Prostate gland (tissue), 2 donors: ENCODE measurements at regions of chr15 and their contacts with region 1.

Region 1: GRCh38 chr15:93072411-93073394 is 16.3 kb downstream of the RGMA start:
- DNase-seq: peak; percentile 86
- H3K4me3 ChIP-seq: peak overlapping the region; percentile 60 to 68
- H3K27ac ChIP-seq: peak overlapping the region; percentile 74 to 79
- H3K4me1 ChIP-seq: peaks cover 3% of the 10 kb centered on the region
- H3K27me3 ChIP-seq: no peaks in the 10 kb centered on the region
- CTCF ChIP-seq: peak in 2 of 4 experiments; percentile 10 to 27
- POLR2A ChIP-seq: peak; percentile 86

Region 2: DNA sequence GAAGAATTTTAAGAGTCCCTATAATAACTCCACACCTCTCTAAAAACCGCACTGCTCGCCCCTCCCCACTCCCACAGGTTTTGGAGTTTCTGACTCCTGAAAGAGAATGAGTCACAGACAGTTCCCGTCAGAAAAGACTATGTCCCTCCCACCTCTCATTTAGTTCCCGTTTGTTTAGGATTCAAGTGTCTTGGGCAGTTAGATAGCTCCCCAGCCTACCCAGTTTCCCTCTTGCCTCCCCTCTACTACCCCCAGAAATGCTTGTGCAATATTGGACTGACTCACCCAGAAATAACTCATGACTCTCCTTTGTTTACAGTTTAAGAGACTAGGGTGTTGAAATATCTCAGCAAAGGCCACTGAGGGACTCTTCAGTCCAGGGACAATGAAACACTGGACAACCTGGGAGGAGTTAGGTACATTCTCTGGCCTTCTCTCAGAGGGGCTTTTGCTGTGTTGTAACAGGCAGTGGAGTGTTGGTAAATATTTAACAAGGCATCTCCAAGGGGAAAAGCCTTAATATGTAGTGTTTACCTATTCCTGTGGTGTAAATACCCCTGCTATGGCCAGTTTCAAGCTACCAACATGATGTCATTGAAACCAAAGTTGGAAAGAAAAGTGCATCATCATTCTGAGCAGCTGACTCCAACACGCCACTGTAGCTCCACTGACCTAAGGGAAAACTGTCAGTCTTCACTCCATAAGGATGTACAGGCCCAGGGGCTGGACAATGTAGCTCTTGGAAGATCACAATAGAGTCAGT is 268.7 kb before region 1 on chr15:
- intact Hi-C with region 1: loop called (anchors 5 kb)
- DNase-seq: peak; percentile 71
- H3K4me3 ChIP-seq: no peak overlapping the region
- H3K27ac ChIP-seq: peak overlapping the region; percentile 71 to 76
- H3K4me1 ChIP-seq: no peaks in the 10 kb centered on the region
- H3K27me3 ChIP-seq: no peaks in the 10 kb centered on the region
- CTCF ChIP-seq: no peak
- POLR2A ChIP-seq: peak; percentile 35

Region 3: DNA sequence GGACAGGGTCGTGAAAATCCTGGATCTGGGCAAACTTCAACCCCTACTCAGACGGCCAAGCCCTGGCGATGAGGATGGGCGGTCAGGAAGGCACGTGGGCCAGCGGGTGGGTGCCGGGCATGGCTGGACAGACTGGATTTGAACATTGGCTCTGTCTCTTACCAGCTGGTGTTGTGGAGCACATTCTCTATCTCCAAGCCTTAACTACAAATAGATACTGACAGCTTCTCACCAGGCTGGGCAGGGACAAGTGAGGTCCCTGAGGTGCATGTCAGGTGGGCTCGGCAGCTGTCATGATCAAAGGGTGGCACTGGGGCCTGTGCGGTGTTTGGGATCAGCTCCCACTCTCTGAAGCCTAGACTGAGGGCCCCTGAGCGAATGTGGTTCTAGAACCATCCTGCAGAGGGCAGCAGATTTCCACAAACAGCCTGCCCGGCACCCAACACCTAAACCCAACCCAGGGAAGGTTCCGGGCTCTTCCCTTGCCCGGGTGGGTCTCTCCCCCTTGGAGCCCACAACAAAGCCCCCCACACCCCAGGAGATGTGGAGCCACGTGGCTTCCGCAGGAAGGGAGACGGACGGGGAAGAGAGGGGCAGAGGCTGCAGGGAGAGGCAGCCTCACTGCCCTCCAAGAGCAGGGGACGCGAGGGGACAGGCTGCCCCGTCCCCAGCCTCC is 42.1 kb before region 1 on chr15:
- intact Hi-C with region 1: loop called (anchors 5 kb)
- DNase-seq: peak; percentile 77
- H3K4me3 ChIP-seq: no peak overlapping the region
- H3K27ac ChIP-seq: peak overlapping the region; percentile 8 to 59
- H3K4me1 ChIP-seq: peaks cover 31% of the 10 kb centered on the region
- H3K27me3 ChIP-seq: no peaks in the 10 kb centered on the region
- CTCF ChIP-seq: peak; percentile 72 to 89 (median 86)
- POLR2A ChIP-seq: no peak

Region 4: GRCh38 chr15:93298901-93299300 is 226.2 kb after region 1 on chr15:
- intact Hi-C with region 1: no loop called
- DNase-seq: peak; percentile 11
- H3K4me3 ChIP-seq: no peak overlapping the region
- H3K27ac ChIP-seq: no peak overlapping the region
- H3K4me1 ChIP-seq: no peaks in the 10 kb centered on the region
- H3K27me3 ChIP-seq: no peaks in the 10 kb centered on the region
- CTCF ChIP-seq: no peak
- POLR2A ChIP-seq: no peak